Body of pancreas (tissue), 4 donors: ENCODE measurements at regions of chr17 and their contacts with region 1.

Region 1: DNA sequence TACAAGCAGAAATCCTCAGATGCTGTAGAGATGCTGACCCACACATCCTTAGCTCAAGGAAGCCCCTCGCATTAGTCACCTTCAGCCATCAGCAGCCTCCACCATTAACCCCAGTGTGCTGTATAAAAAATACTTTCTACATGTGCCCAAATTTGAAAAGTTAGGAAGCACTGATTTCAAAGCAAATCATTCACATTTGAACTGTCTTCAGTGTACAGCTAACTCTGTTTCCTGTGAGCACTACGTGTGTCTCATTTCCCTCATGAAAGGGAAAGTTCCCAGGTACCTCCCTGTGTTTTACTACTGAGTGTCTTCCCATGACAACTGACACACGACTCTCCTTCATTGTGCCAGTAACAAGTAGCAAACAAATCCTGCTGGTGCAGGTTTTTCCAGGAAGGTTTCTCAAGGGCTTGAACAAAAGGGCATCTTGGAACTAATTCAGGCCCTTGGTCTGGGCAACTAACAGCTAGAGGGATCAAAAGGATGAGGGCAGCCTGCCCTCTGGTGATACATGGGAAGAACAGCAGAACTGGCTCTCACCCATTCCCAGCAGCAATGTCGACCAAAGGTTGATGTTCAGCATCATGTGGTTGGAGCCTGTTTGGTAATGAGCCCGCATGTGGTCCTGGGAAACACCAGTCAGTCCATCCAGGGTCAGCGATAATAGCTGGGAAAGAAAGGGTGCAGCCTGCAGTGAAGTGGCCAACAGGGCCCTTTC is 4.0 kb downstream of the SLC35B1 start:
- DNase-seq: peak in 2 of 4 donors; percentile 31 to 32
- ATAC-seq: no peak
- H3K4me3 ChIP-seq: no peak overlapping the region
- H3K27ac ChIP-seq: no peak overlapping the region
- H3K4me1 ChIP-seq: peaks cover 25% of the 10 kb centered on the region
- H3K27me3 ChIP-seq: no peaks in the 10 kb centered on the region
- CTCF ChIP-seq: peak in 3 of 7 experiments; percentile 21 to 33 (median 33)
- POLR2A ChIP-seq: no peak

Region 2: GRCh38 chr17:49575579-49576087 is 128.1 kb before region 1 on chr17 and contains the start of gene NXPH3:
- intact Hi-C with region 1: loop called (anchors 5 kb)
- DNase-seq: peak; percentile 42 to 57 (median 48)
- ATAC-seq: peak; percentile 63
- H3K4me3 ChIP-seq: peak within 1 kb of the TSS in 1 of 2 donors; percentile 29
- H3K27ac ChIP-seq: no peak within 1 kb of the TSS
- H3K4me1 ChIP-seq: peaks cover 21% of the 10 kb centered on the region
- H3K27me3 ChIP-seq: peaks cover 0 to 32% of the 10 kb centered on the region in 2 donors
- CTCF ChIP-seq: peak in 5 of 7 experiments; percentile 15 to 63 (median 38)
- POLR2A ChIP-seq: no peak
- total RNA-seq, gene NXPH3: 0.78 to 0.99 TPM

Region 3: GRCh38 chr17:49763735-49764558 is 60.2 kb after region 1 on chr17 and contains the start of gene FAM117A:
- intact Hi-C with region 1: no loop called
- DNase-seq: peak; percentile 98 to 99 (median 98)
- ATAC-seq: peak; percentile 97
- H3K4me3 ChIP-seq: peak within 1 kb of the TSS; percentile 76 to 95
- H3K27ac ChIP-seq: peak within 1 kb of the TSS; percentile 33 to 85 (median 81)
- H3K4me1 ChIP-seq: peaks cover 30% of the 10 kb centered on the region
- H3K27me3 ChIP-seq: no peaks in the 10 kb centered on the region
- CTCF ChIP-seq: no peak
- POLR2A ChIP-seq: peak in 2 of 3 donors; percentile 78 to 85
- total RNA-seq, gene FAM117A: 4.3 to 11.7 TPM